ENCODE measurements at regions of chr14 and their contacts with region 1.

Region 1: DNA sequence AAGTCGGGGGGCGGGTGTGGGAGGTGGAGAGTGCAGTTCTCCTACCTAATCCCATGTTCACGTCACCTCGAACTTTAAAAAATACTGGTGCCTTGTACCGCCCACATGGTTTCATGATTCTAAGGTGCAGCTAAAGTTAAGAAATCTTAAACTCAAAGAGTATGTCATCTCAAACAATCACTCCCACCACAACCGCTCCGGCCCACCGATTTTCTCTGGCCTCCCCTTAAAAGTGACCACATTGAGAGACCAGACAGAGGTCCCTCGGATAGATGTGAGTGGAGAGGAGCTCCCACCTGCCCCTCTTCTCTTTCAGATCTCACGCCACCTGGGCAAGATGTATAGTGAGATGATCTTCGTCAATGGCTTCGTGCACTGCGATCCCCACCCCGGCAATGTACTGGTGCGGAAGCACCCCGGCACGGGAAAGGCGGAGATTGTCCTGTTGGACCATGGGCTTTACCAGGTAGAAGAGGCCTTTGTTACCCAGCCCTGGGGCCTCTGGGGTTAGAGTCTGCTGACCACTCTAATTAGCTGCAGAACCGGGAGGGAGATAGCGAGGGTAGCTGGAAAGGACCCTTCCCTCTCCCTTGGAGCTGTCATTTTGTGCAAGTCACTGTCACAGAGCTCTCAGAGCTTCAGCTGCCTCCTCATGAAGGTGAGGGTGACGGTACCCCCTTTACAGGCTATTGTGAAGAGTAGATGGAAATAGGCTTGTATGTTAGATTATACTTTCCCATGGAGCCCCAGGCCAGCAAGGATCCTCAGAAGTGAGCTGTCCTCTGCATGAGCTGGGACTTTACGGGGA is 124.4 kb downstream of the ADCK1 start:
- DNase-seq: no peak
- ATAC-seq: no peak
- H3K4me3 Mint-ChIP-seq: no peak overlapping the region
- H3K27ac Mint-ChIP-seq: no peak overlapping the region
- H3K4me1 Mint-ChIP-seq: no peaks in the 10 kb centered on the region
- H3K27me3 Mint-ChIP-seq: no peaks in the 10 kb centered on the region

Region 2: DNA sequence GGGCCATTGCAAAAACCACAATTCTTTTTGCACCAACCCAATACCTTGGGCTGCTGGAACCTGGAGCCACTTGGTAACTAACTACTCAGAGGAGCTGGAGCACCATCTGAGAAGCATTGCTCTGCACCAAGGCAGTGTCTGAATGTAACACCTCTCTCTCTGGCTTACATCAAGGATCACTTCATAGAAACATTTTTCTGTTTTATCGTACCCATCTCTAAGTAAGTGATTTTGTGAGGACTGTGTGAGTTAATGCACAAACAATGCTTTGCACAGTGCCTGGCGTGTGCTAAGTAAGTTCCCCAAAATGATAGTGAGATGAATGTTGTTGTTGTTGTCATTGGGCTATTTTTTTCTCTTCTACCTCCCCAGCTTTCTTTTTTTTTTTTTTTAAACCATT is 13.0 kb before region 1 on chr14:
- CTCF ChIA-PET with region 1: no interaction called
- POLR2A ChIA-PET with region 1: interaction called, 15 read pairs
- intact Hi-C with region 1: no loop called
- DNase-seq: no peak
- ATAC-seq: no peak
- H3K4me3 Mint-ChIP-seq: no peak overlapping the region
- H3K27ac Mint-ChIP-seq: no peak overlapping the region
- H3K4me1 Mint-ChIP-seq: peaks cover 6% of the 10 kb centered on the region
- H3K27me3 Mint-ChIP-seq: no peaks in the 10 kb centered on the region